ENCODE measurements at regions of chr9 and their contacts with region 1.

Region 1: DNA sequence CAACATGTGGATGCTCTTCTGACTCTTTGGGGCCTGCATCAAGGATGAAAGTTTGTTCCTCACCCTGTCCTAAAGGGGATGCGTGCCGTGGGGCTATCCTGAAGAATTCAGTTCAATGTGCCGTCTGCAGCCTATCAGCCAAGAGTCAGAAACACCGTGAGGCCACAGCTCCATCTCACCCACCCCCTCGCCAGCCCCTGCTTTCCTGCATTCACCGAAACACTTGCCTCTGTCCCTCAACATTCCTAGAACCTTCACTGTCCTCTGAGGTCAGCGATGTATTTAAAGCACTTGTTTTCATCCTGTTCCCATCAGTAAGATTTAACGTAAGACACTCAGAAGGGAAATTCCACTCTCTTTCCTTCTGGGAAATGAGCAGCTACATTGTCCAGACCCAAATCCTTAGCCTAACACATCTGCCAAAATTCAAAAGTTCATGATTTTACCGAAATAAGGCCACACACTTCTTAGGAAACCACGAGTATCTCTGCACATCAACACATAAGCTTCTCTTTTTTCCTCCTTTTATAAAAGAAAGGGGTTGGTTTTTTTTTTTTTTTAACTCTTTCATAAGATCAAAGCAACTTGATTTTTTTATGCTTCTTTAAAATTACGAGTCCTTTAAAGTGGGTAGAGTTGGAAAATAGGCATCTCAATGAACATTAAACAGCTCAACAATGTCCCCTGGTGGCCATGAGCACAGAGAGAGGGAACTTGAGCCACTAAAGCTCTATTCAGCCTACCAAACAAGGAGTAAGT is 100.7 kb downstream of the SUSD1 start:
- DNase-seq: peak in 41 of 42 donors; percentile 14 to 90 (median 68)

Region 2: GRCh38 chr9:111759762-111760639 is 314.4 kb before region 1 on chr9:
- intact Hi-C with region 1: loop called (anchors 5 kb)
- DNase-seq: peak in 27 of 42 donors; percentile 12 to 83 (median 52)

Region 3: GRCh38 chr9:111896353-111896958 is 178.0 kb before region 1 on chr9 and contains the start of gene UGCG:
- intact Hi-C with region 1: loop called (anchors 10 kb)
- DNase-seq: peak; percentile 59 to 95 (median 90)

Region 4: GRCh38 chr9:112012026-112012902 is 62.2 kb before region 1 on chr9:
- intact Hi-C with region 1: no loop called
- DNase-seq: peak in 33 of 42 donors; percentile 13 to 86 (median 35)